CD8-positive, alpha-beta T cell (primary cell): ENCODE measurements at regions of chr2 and their contacts with region 1.

Region 1: GRCh38 chr2:167898340-167898739 is 349.1 kb downstream of the STK39 start:
- DNase-seq: no peak
- ATAC-seq: no peak
- H3K4me3 ChIP-seq: no peak overlapping the region
- H3K4me3 Mint-ChIP-seq: no peak overlapping the region
- H3K27ac ChIP-seq: no peak overlapping the region
- H3K27ac Mint-ChIP-seq: no peak overlapping the region
- H3K4me1 ChIP-seq: no peaks in the 10 kb centered on the region
- H3K4me1 Mint-ChIP-seq: no peaks in the 10 kb centered on the region
- H3K27me3 ChIP-seq: no peaks in the 10 kb centered on the region
- H3K27me3 Mint-ChIP-seq: peaks cover 10% of the 10 kb centered on the region
- CTCF ChIP-seq: no peak

Region 2: GRCh38 chr2:167048829-167049228 is 849.5 kb before region 1 on chr2:
- CTCF ChIA-PET with region 1: no interaction called
- POLR2A ChIA-PET with region 1: no interaction called
- intact Hi-C with region 1: loop called in 1 of 2 experiments (anchors 5 kb)
- DNase-seq: no peak
- ATAC-seq: no peak
- H3K4me3 ChIP-seq: no peak overlapping the region
- H3K4me3 Mint-ChIP-seq: no peak overlapping the region
- H3K27ac ChIP-seq: no peak overlapping the region
- H3K27ac Mint-ChIP-seq: no peak overlapping the region
- H3K4me1 ChIP-seq: no peaks in the 10 kb centered on the region
- H3K4me1 Mint-ChIP-seq: no peaks in the 10 kb centered on the region
- H3K27me3 ChIP-seq: no peaks in the 10 kb centered on the region
- H3K27me3 Mint-ChIP-seq: no peaks in the 10 kb centered on the region
- CTCF ChIP-seq: no peak

Region 3: GRCh38 chr2:167940346-167940725 is 42.0 kb after region 1 on chr2:
- CTCF ChIA-PET with region 1: no interaction called
- POLR2A ChIA-PET with region 1: no interaction called
- intact Hi-C with region 1: no loop called
- DNase-seq: no peak
- ATAC-seq: no peak
- H3K4me3 ChIP-seq: no peak overlapping the region
- H3K4me3 Mint-ChIP-seq: no peak overlapping the region
- H3K27ac ChIP-seq: no peak overlapping the region
- H3K27ac Mint-ChIP-seq: no peak overlapping the region
- H3K4me1 ChIP-seq: no peaks in the 10 kb centered on the region
- H3K4me1 Mint-ChIP-seq: no peaks in the 10 kb centered on the region
- H3K27me3 ChIP-seq: no peaks in the 10 kb centered on the region
- H3K27me3 Mint-ChIP-seq: peaks cover 11% of the 10 kb centered on the region
- CTCF ChIP-seq: no peak